Activated CD8-positive, alpha-beta T cell treated with anti-CD3 and anti-CD28 coated beads for 36 hours (primary cell): ENCODE measurements at regions of chr1 and their contacts with region 1.

Region 1: DNA sequence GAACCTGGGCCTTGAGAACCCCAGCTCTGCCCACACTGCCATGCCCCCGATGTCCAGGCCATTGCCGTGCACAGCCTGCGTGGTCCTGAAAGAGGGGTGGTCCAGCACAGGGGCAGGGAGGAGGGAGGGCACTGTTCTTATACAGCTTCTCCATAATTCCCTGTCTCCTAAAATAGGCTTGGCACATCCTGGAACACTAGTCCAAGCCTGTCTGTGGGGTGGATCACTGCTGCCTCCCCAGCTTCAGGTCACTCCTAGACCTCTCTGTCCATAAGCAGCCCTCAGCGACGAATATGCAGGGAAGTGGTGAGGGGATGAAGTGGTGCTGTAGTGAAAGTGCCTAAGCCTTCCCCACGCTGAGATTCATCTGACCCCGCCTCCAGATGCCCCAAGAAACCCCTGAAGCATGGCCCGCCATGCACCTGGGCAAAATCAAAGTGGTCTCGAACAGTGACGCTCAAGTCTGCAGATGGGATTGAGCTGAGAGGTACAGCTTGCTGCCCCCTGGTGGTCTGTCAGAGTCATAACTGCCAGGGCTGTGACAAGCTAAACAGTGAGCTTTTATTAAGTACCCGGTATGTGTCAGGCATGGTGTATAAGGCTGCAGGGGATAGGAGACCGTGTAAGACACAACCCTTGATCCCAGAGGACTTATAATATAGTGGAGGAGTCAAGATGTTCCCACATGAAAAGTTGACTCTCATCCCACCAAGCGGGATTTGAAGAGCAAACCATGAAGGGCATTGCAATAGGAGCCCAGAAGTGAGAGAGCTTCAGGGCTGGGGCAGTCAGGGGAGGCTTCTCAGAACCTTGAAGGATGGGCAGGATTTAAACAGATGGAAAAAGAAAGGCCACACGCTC is 66.6 kb downstream of the FAM163A start:
- DNase-seq: peak; percentile 76
- ATAC-seq: peak; percentile 83
- H3K4me3 Mint-ChIP-seq: no peak overlapping the region
- H3K27ac Mint-ChIP-seq: no peak overlapping the region
- H3K4me1 Mint-ChIP-seq: peaks cover 4% of the 10 kb centered on the region
- H3K27me3 Mint-ChIP-seq: peaks cover 2% of the 10 kb centered on the region
- CTCF ChIP-seq: peak; percentile 87

Region 2: DNA sequence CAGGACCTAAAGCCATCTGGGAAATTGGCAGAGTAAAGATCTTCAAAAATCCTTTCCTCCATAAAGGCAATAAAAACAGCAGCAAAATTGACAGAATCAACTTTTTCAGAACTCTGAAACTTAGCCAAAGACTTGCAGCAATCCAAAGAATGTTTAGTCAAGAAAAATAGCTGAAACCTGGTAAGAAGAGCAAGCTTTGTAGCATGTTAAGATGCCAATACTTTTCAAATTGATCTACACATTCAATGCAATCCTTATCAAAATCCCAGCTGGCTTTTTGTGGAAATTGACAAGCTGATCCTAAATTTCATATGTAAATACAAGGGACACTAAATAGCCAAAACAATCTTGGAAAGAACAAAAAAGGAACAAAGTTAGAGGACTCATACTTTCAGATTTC is 90.5 kb before region 1 on chr1:
- CTCF ChIA-PET with region 1: interaction called, 13 read pairs
- POLR2A ChIA-PET with region 1: no interaction called
- intact Hi-C with region 1: no loop called
- DNase-seq: no peak
- ATAC-seq: no peak
- H3K4me3 Mint-ChIP-seq: no peak overlapping the region
- H3K27ac Mint-ChIP-seq: no peak overlapping the region
- H3K4me1 Mint-ChIP-seq: no peaks in the 10 kb centered on the region
- H3K27me3 Mint-ChIP-seq: no peaks in the 10 kb centered on the region
- CTCF ChIP-seq: no peak

Region 3: GRCh38 chr1:179750630-179751029 is 59.1 kb before region 1 on chr1:
- CTCF ChIA-PET with region 1: interaction called, 14 read pairs
- POLR2A ChIA-PET with region 1: no interaction called
- intact Hi-C with region 1: no loop called
- DNase-seq: no peak
- ATAC-seq: no peak
- H3K4me3 Mint-ChIP-seq: no peak overlapping the region
- H3K27ac Mint-ChIP-seq: no peak overlapping the region
- H3K4me1 Mint-ChIP-seq: no peaks in the 10 kb centered on the region
- H3K27me3 Mint-ChIP-seq: peaks cover 20% of the 10 kb centered on the region
- CTCF ChIP-seq: no peak

Region 4: GRCh38 chr1:179794669-179795068 is 15.1 kb before region 1 on chr1:
- CTCF ChIA-PET with region 1: interaction called, 92 read pairs
- POLR2A ChIA-PET with region 1: no interaction called
- intact Hi-C with region 1: no loop called
- DNase-seq: no peak
- ATAC-seq: no peak
- H3K4me3 Mint-ChIP-seq: no peak overlapping the region
- H3K27ac Mint-ChIP-seq: no peak overlapping the region
- H3K4me1 Mint-ChIP-seq: no peaks in the 10 kb centered on the region
- H3K27me3 Mint-ChIP-seq: no peaks in the 10 kb centered on the region
- CTCF ChIP-seq: no peak

Region 5: DNA sequence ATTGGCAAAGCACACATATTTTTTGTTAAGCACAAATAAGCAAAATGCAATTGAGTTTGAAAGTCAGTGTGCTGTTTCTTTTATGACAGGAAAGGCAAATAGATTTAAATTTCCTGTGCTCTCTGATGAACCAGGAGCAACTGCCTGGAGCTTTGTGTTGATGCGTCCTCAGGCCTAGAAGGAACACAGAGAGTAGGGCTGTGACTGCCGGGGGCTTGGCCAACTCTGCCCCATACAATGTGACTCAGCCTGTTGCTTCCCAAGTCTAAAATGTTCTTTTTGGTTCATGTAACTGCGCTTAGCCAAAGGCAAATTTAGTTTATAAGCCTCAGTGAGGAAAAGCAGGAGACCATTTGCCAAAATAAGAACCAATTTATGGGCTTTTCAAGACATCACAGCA is 30.4 kb after region 1 on chr1:
- CTCF ChIA-PET with region 1: interaction called, 16 read pairs
- POLR2A ChIA-PET with region 1: no interaction called
- intact Hi-C with region 1: no loop called
- DNase-seq: no peak
- ATAC-seq: no peak
- H3K4me3 Mint-ChIP-seq: no peak overlapping the region
- H3K27ac Mint-ChIP-seq: no peak overlapping the region
- H3K4me1 Mint-ChIP-seq: peaks cover 2% of the 10 kb centered on the region
- H3K27me3 Mint-ChIP-seq: no peaks in the 10 kb centered on the region
- CTCF ChIP-seq: no peak

Region 6: DNA sequence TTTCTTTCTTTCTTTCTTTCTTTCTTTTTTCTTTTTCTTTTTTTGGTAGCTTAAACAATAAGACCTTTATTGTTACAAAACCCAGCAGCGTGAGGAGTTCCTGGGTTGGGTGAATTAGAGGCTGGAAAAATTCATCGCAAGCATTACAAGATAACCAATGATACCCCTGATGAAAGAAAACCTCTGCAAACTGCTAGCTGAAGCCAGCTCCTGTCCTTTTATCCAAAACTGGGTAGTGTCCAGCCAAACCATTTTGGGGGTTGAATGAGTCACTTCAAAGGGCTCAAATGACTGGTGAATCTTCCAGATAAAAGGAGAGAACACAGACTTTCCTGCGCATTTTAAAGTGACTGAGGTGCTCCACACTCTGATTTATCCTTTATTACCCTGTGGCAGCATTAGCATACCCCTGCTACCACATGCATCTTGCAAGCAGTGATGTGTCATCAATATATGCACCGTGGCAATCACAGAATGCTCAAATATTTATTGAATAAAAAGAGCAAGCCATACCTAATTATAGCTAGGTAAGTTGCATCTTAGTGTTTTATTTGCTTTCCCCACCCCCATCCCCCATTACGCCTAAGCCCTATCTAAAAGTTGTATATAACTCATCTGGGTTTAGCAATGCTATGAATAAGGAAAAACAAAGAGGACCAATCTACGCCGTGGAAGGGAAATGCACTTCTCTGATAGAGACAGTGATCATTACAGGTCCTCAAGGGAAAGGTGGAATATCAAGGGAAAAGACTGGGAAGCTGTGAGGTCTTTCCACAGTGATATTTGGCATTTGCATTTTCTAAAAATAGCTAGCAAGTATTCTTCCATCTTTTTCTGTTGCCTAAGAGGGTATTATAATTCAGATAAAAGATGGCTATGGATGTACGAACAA is 112.5 kb after region 1 on chr1:
- CTCF ChIA-PET with region 1: no interaction called
- POLR2A ChIA-PET with region 1: no interaction called
- intact Hi-C with region 1: no loop called
- DNase-seq: no peak
- ATAC-seq: no peak
- H3K4me3 Mint-ChIP-seq: no peak overlapping the region
- H3K27ac Mint-ChIP-seq: peak overlapping the region; percentile 7
- H3K4me1 Mint-ChIP-seq: peaks cover 14% of the 10 kb centered on the region
- H3K27me3 Mint-ChIP-seq: no peaks in the 10 kb centered on the region
- CTCF ChIP-seq: no peak

Region 7: GRCh38 chr1:180386745-180387367 is 577.1 kb after region 1 on chr1:
- CTCF ChIA-PET with region 1: no interaction called
- POLR2A ChIA-PET with region 1: no interaction called
- intact Hi-C with region 1: no loop called
- DNase-seq: no peak
- ATAC-seq: no peak
- H3K4me3 Mint-ChIP-seq: no peak overlapping the region
- H3K27ac Mint-ChIP-seq: peak overlapping the region; percentile 39
- H3K4me1 Mint-ChIP-seq: peaks cover 12% of the 10 kb centered on the region
- H3K27me3 Mint-ChIP-seq: no peaks in the 10 kb centered on the region
- CTCF ChIP-seq: no peak